MCF 10A (cell line): ENCODE measurements at regions of chr22 and their contacts with region 1.

Region 1: DNA sequence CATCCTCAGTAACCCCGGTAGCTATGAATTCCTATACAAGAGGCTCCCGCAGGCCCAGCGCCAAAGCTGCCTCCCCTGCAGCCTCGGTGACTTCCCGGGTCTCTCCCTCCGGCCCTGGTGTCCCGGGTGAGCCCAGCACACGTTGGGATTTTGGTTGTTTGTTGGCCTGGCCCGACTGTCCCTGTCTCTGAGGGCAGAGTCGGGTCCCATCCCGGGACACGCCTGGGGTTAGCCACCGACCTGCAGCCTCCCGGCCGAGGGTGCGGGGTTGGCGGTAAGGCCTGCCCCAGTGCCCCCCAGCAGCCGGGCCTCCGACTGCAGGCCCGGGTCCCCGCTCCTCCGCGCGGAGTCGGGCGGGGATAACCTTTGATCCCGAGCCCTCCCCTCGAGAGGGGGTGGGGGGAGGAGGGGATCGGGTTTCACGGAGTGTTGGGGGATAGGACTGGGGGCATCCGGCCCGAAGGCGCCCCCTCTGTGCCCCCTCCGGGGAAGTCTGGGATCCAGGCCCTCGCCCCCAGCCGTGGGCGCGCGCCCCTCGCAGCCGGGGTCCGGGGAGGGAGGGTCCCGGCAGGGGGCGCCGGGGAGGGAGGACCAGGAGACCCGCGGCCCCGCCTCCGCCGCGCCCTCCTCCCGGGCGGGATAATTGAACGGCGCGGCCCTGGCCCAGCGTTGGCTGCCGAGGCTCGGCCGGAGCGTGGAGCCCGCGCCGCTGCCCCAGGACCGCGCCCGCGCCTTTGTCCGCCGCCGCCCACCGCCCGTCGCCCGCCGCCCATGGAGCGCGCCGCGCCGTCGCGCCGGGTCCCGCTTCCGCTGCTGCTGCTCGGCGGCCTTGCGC is at the start of gene FBLN1:
- DNase-seq: peak; percentile 52
- H3K4me3 Mint-ChIP-seq: peak within 1 kb of the TSS; percentile 85
- H3K27ac Mint-ChIP-seq: peak within 1 kb of the TSS; percentile 86
- H3K4me1 Mint-ChIP-seq: peaks cover 13% of the 10 kb centered on the region
- H3K27me3 Mint-ChIP-seq: no peaks in the 10 kb centered on the region
- CTCF ChIP-seq: peak; percentile 36
- total RNA-seq, gene FBLN1: 69.0 and 110 TPM in 2 replicates

Region 2: GRCh38 chr22:45441138-45441537 is 61.3 kb before region 1 on chr22:
- CTCF ChIA-PET with region 1: interaction called, 4 read pairs
- POLR2A ChIA-PET with region 1: interaction called, 5 read pairs
- intact Hi-C with region 1: loop called (anchors 2 kb)
- DNase-seq: peak; percentile 68
- H3K4me3 Mint-ChIP-seq: no peak overlapping the region
- H3K27ac Mint-ChIP-seq: no peak overlapping the region
- H3K4me1 Mint-ChIP-seq: peaks cover 19% of the 10 kb centered on the region
- H3K27me3 Mint-ChIP-seq: no peaks in the 10 kb centered on the region
- CTCF ChIP-seq: peak; percentile 81

Region 3: DNA sequence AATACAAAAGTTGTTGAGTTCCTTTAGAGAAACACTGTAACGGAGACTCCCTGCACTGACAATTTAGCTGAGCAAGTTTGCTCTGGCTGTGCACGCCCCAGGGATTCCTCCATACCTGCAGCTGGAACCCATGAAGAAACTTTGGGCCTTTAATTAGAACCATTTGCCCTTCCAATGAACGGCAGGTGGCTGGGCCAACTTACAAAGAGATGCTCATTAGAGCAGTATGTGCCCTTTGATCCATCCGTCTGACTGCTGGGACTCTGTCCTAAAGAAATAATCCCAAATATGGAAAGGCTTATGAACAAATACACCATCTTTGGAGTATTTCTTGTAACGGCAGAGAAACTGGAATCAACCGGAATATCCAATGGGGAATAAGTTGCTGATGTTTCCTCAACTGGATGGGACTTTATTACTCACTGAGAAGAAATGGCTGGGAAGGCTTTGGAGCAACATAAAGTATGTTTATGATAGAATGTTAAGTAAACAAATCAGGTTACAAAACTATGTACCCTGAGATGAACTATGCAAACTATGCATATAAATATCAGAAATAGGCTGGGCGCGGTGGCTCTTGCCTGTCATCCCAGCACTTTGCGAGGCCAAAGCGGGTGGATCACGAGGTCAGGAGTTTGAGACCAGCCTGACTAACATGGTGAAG is 24.2 kb before region 1 on chr22:
- CTCF ChIA-PET with region 1: interaction called, 4 read pairs
- POLR2A ChIA-PET with region 1: interaction called, 12 read pairs
- intact Hi-C with region 1: no loop called
- DNase-seq: peak; percentile 87
- H3K4me3 Mint-ChIP-seq: no peak overlapping the region
- H3K27ac Mint-ChIP-seq: peak overlapping the region; percentile 84
- H3K4me1 Mint-ChIP-seq: peaks cover 25% of the 10 kb centered on the region
- H3K27me3 Mint-ChIP-seq: no peaks in the 10 kb centered on the region
- CTCF ChIP-seq: no peak

Region 4: GRCh38 chr22:45516923-45517675 is 14.7 kb after region 1 on chr22:
- CTCF ChIA-PET with region 1: interaction called, 4 read pairs
- POLR2A ChIA-PET with region 1: interaction called, 14 read pairs
- intact Hi-C with region 1: no loop called
- DNase-seq: peak; percentile 87
- H3K4me3 Mint-ChIP-seq: no peak overlapping the region
- H3K27ac Mint-ChIP-seq: peak overlapping the region; percentile 40
- H3K4me1 Mint-ChIP-seq: peaks cover 47% of the 10 kb centered on the region
- H3K27me3 Mint-ChIP-seq: no peaks in the 10 kb centered on the region
- CTCF ChIP-seq: no peak

Region 5: GRCh38 chr22:45537734-45538181 is 35.3 kb after region 1 on chr22:
- CTCF ChIA-PET with region 1: interaction called, 4 read pairs
- POLR2A ChIA-PET with region 1: interaction called, 30 read pairs
- intact Hi-C with region 1: no loop called
- DNase-seq: peak; percentile 97
- H3K4me3 Mint-ChIP-seq: peak overlapping the region; percentile 20
- H3K27ac Mint-ChIP-seq: peak overlapping the region; percentile 87
- H3K4me1 Mint-ChIP-seq: peaks cover 13% of the 10 kb centered on the region
- H3K27me3 Mint-ChIP-seq: no peaks in the 10 kb centered on the region
- CTCF ChIP-seq: no peak